GM12878 (cell line): ENCODE measurements at regions of chr1 and their contacts with region 1.

Region 1: DNA sequence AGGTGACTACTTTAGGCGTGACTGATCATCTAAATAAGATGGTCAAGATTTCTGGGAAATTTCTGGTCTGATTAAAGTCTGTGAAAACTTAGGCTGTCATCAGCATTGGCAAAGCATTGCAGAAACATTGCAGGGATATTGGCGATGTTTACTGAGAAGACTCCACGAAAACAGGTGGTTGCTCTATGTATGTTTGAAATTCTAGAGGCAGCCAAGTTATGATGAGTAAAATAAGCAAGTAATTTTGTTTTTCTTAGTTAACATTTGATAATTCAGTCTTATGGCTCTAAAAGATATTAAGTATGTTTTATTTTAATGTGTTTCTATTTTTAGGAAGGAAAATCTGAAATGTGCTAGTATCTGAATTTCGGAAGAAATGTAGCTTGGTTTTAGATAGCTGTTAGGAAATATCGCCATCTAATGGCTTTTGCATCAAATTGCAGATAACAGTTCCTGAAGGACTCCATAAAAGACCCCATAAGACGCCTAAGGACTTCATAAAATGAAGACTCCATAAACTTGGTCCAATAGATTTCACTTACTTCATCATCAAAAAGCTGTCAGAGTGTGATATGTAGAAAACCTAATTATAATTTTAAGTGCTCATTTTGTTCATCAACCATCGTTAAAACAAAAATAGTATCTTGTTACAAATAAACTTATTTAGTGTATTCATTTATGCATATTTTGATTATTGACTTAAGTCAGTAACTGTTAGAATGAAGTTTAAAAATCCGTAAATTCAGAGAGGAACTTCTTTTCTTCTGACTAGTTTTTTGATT is 344.6 kb downstream of the RYR2 start:
- DNase-seq: no peak
- ATAC-seq: peak; percentile 58
- H3K4me3 ChIP-seq: no peak overlapping the region
- H3K27ac ChIP-seq: no peak overlapping the region
- H3K4me1 ChIP-seq: no peaks in the 10 kb centered on the region
- H3K27me3 ChIP-seq: no peaks in the 10 kb centered on the region
- CTCF ChIP-seq: peak; percentile 46 to 61 (median 55); a peak in 5 of 6 replicates
- EP300 ChIP-seq: no peak
- POLR2A ChIP-seq: no peak
- RAD21 ChIP-seq: peak; percentile 63

Region 2: GRCh38 chr1:236753516-236753915 is 633.0 kb before region 1 on chr1:
- CTCF ChIA-PET with region 1: interaction called, 45 read pairs
- POLR2A ChIA-PET with region 1: no interaction called
- RAD21 ChIA-PET with region 1: interaction called, 19 read pairs
- SMC1A ChIA-PET with region 1: interaction called, 3 read pairs
- in situ Hi-C with region 1: loop called (anchors 10 kb)
- intact Hi-C with region 1: loop called (anchors 2 kb)
- DNase-seq: no peak
- ATAC-seq: peak; percentile 79
- H3K4me3 ChIP-seq: no peak overlapping the region
- H3K27ac ChIP-seq: no peak overlapping the region
- H3K4me1 ChIP-seq: no peaks in the 10 kb centered on the region
- H3K27me3 ChIP-seq: no peaks in the 10 kb centered on the region; a peak in 1 of 4 replicates
- CTCF ChIP-seq: peak; percentile 23 to 33 (median 26); a peak in 3 of 6 replicates
- EP300 ChIP-seq: no peak
- POLR2A ChIP-seq: no peak
- RAD21 ChIP-seq: peak; percentile 43

Region 3: DNA sequence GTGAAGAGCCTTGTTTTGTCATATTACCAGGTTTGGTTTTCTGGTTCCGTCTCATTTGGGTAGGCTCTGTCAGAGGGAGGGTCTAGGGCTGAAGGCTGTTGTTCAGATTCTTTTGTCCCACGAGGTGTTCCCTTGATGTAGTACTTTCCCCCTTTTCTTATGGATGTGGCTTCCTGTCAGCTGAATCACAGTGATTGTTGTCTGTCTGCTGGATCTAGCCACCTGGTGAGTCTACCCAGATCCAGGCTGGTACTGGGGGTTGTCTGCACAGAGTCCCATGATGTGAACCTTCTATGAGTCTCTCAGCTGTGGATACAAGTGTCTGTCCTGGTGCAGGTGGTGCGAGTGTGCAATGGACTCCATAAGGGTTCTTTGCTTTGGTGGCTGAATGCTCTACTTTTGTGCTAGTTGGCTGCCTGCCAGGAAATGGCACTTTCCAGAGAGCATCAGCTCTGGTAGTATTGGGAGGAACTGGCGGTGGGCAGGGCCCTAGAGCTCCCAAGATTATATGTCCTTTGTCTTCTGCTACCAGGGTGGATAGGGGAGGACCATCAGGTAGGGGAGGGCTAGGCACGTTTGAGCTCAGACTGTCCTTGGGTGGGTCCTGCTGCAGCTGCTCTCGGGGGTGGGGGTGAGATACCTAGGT is 98.6 kb before region 1 on chr1:
- CTCF ChIA-PET with region 1: no interaction called
- POLR2A ChIA-PET with region 1: no interaction called
- RAD21 ChIA-PET with region 1: no interaction called
- SMC1A ChIA-PET with region 1: no interaction called
- in situ Hi-C with region 1: no loop called
- intact Hi-C with region 1: no loop called
- DNase-seq: no peak
- ATAC-seq: no peak
- H3K4me3 ChIP-seq: no peak overlapping the region
- H3K27ac ChIP-seq: no peak overlapping the region
- H3K4me1 ChIP-seq: no peaks in the 10 kb centered on the region
- H3K27me3 ChIP-seq: no peaks in the 10 kb centered on the region
- CTCF ChIP-seq: no peak
- EP300 ChIP-seq: no peak
- POLR2A ChIP-seq: no peak
- RAD21 ChIP-seq: no peak

Region 4: DNA sequence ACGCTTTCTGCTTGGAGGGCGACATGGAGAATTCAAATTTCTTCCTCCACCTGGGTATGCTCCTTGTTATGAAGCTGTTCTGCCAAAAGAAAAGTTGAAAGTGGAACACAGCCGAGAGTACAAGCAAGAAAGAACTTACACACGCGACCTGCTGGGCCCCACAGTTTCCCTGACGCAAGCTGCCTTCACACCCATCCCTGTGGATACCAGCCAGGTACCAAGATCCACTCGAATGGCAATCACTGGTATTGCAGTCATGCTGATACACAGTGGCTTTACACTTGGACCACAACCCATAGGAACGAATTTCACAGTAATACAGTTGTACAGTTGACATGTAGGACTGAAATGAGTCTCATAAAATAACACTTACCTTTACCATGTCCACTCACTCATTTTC is 116.7 kb after region 1 on chr1:
- CTCF ChIA-PET with region 1: no interaction called
- POLR2A ChIA-PET with region 1: no interaction called
- RAD21 ChIA-PET with region 1: no interaction called
- SMC1A ChIA-PET with region 1: no interaction called
- in situ Hi-C with region 1: no loop called
- intact Hi-C with region 1: no loop called
- DNase-seq: no peak
- ATAC-seq: no peak
- H3K4me3 ChIP-seq: no peak overlapping the region
- H3K27ac ChIP-seq: no peak overlapping the region
- H3K4me1 ChIP-seq: no peaks in the 10 kb centered on the region; the same call in 1 of the 2 replicates
- H3K27me3 ChIP-seq: no peaks in the 10 kb centered on the region; a peak in 1 of 4 replicates
- CTCF ChIP-seq: no peak
- EP300 ChIP-seq: no peak
- POLR2A ChIP-seq: no peak
- RAD21 ChIP-seq: no peak

Region 5: GRCh38 chr1:237562242-237562823 is 175.8 kb after region 1 on chr1:
- CTCF ChIA-PET with region 1: interaction called, 9 read pairs
- POLR2A ChIA-PET with region 1: no interaction called
- RAD21 ChIA-PET with region 1: interaction called, 7 read pairs
- SMC1A ChIA-PET with region 1: no interaction called
- in situ Hi-C with region 1: no loop called
- intact Hi-C with region 1: loop called (anchors 5 kb)
- DNase-seq: peak; percentile 4
- ATAC-seq: peak; percentile 93
- H3K4me3 ChIP-seq: no peak overlapping the region
- H3K27ac ChIP-seq: no peak overlapping the region
- H3K4me1 ChIP-seq: no peaks in the 10 kb centered on the region
- H3K27me3 ChIP-seq: no peaks in the 10 kb centered on the region
- CTCF ChIP-seq: peak; percentile 31 to 52 (median 52); a peak in 5 of 6 replicates
- EP300 ChIP-seq: no peak
- POLR2A ChIP-seq: no peak
- RAD21 ChIP-seq: peak; percentile 47